HCT116 (cell line): ENCODE measurements at regions of chr1 and their contacts with region 1.

Region 1: GRCh38 chr1:145999321-146000241 is 3.2 kb upstream of the TXNIP start:
- DNase-seq: no peak
- ATAC-seq: no peak
- H3K4me3 ChIP-seq: no peak overlapping the region
- H3K27ac ChIP-seq: no peak overlapping the region
- H3K4me1 ChIP-seq: no peaks in the 10 kb centered on the region
- H3K27me3 ChIP-seq: no peaks in the 10 kb centered on the region
- CTCF ChIP-seq: no peak
- POLR2A ChIP-seq: no peak
- RAD21 ChIP-seq: no peak

Region 2: GRCh38 chr1:145690624-145691035 is 309.0 kb before region 1 on chr1:
- CTCF ChIA-PET with region 1: no interaction called
- POLR2A ChIA-PET with region 1: no interaction called
- RAD21 ChIA-PET with region 1: no interaction called
- intact Hi-C with region 1: no loop called
- DNase-seq: no peak
- ATAC-seq: no peak
- H3K4me3 ChIP-seq: no peak overlapping the region
- H3K27ac ChIP-seq: no peak overlapping the region
- H3K4me1 ChIP-seq: no peaks in the 10 kb centered on the region
- H3K27me3 ChIP-seq: no peaks in the 10 kb centered on the region
- CTCF ChIP-seq: no peak
- POLR2A ChIP-seq: no peak
- RAD21 ChIP-seq: no peak

Region 3: GRCh38 chr1:145837656-145838055 is 161.9 kb before region 1 on chr1:
- CTCF ChIA-PET with region 1: no interaction called
- POLR2A ChIA-PET with region 1: no interaction called
- RAD21 ChIA-PET with region 1: no interaction called
- intact Hi-C with region 1: no loop called
- DNase-seq: no peak
- ATAC-seq: no peak
- H3K4me3 ChIP-seq: no peak overlapping the region
- H3K27ac ChIP-seq: no peak overlapping the region
- H3K4me1 ChIP-seq: no peaks in the 10 kb centered on the region
- H3K27me3 ChIP-seq: no peaks in the 10 kb centered on the region
- CTCF ChIP-seq: no peak
- POLR2A ChIP-seq: no peak
- RAD21 ChIP-seq: no peak

Region 4: DNA sequence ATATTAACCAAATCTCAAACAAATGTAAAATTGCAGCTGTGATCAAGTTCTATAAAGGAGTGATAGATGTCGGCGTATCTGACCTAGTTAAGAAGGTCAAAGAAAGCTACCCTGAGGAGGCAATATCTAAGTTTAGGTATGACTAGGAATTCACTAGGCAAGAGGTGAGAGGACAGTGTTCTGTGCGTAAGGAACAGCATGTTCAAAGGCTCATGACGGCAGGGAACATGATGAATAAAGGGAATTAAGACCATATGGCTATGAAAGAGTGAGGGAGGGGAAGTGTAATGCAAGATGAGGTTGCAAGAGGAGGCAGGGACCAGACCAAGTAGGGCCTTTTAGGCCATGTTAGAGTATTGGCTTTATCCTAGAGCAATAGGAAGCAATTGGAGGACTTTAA is 50.4 kb before region 1 on chr1:
- CTCF ChIA-PET with region 1: no interaction called
- POLR2A ChIA-PET with region 1: no interaction called
- RAD21 ChIA-PET with region 1: no interaction called
- intact Hi-C with region 1: loop called (anchors 10 kb)
- DNase-seq: no peak
- ATAC-seq: no peak
- H3K4me3 ChIP-seq: no peak overlapping the region
- H3K27ac ChIP-seq: no peak overlapping the region
- H3K4me1 ChIP-seq: peaks cover 0 to 3% of the 10 kb centered on the region in 2 experiments; a peak in 1 of 4 replicates
- H3K27me3 ChIP-seq: no peaks in the 10 kb centered on the region
- CTCF ChIP-seq: no peak
- POLR2A ChIP-seq: no peak
- RAD21 ChIP-seq: no peak